Activated CD4-positive, alpha-beta memory T cell treated with anti-CD3 and anti-CD28 coated beads, Interleukin-2, amount 10 ng/mL, durations not matched to agents 7 days and 5 days (primary cell): ENCODE measurements at regions of chr12 and their contacts with region 1.

Region 1: DNA sequence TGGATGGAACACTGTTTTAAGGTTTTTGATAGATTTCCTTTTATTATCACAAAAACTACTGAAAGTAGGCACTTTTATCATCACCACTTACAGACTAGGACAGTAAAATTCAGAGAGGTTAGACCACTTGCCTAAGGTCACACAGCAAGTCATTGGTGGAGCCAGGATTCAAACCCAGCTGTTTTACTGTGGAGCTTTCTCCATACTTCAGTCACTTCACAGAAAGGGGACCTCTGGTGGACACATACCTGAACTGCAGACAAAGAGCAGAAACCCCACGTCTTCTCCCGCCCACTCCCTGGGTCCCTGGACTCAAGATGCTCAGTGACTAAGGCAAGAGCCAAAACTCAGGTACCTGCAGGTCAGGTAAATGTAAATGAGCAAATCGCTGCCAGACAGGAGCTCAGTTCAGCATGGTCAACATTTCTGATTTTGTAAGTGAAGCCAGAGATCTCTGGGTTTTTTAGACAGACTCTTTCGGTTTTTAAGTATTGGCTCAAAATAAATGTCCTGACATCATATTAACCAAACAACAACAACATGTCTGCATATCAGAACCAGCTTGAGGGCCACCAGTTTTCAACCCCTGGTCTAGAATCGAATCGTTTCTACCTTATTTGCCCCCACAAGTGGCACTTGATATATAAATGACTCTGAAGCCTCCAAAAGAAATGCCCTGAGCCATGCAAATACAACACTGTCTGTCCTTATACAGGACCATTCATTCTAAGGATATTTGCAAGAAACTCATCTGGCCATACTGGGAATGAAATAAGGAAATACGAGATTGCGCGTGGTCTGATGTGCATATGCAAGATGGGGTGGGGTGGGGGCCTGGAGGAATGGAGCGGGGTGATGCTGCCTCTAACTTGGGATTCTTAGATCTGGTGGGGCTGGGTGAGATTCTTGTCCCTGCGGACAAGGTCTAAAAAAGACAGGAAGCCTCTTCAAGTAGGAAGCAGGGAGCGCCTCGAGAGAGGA is 110.9 kb downstream of the KSR2 start:
- DNase-seq: peak; percentile 52
- H3K4me3 Mint-ChIP-seq: no peak overlapping the region
- H3K27ac Mint-ChIP-seq: no peak overlapping the region
- H3K4me1 Mint-ChIP-seq: no peaks in the 10 kb centered on the region
- H3K27me3 Mint-ChIP-seq: no peaks in the 10 kb centered on the region

Region 2: DNA sequence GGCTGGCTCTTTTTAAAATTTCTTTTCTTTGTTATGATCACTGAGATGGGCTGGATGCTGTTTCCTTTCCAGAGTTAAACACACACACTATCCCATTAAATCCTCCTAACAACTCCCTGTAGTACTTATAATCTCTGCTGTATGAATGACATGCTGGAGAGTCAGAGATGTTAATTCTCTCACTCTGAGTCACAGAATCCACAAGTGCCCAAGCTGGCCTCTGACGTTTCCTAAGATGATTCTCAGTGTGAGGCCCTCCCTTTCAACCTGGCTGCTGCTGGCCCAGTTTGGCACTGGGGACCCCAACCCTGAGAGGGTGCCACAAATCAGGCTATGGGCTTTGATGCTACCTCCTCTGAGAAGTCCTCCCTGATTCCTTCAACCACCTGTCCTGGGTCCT is 501.9 kb before region 1 on chr12:
- CTCF ChIA-PET with region 1: no interaction called
- POLR2A ChIA-PET with region 1: no interaction called
- DNase-seq: no peak
- H3K4me3 Mint-ChIP-seq: no peak overlapping the region
- H3K27ac Mint-ChIP-seq: no peak overlapping the region
- H3K4me1 Mint-ChIP-seq: no peaks in the 10 kb centered on the region
- H3K27me3 Mint-ChIP-seq: peaks cover 11% of the 10 kb centered on the region

Region 3: DNA sequence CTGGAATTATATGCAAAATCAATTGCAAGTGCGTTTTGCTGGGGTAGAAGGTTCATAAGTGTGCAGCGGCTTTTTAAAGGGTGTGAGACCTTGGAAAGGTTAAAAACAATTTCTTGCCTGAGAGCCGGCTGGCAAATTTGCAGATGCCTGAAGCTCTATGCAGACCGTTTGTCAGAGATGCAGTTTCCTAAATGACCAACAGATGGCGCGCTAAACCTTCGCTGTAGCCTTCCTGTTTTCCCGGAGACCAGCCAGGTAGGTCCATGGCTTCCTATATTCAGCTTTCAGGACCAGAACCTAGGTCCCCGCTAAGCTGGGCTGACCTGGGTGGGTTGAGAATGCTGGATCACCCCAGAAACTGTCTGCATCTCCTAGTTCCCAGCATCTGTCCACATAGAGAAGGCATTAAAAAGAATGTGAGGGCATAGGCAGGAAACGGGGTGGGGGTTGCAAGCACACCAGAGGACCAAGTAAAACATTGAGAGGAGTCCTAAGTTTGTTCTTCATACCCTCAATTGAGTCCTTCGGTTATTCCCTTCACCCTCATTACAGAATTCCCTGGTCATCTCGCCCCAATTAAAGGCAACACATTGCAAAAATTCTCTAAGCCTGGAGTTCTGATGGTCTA is 490.8 kb before region 1 on chr12:
- CTCF ChIA-PET with region 1: interaction called, 13 read pairs
- POLR2A ChIA-PET with region 1: no interaction called
- DNase-seq: peak; percentile 56
- H3K4me3 Mint-ChIP-seq: no peak overlapping the region
- H3K27ac Mint-ChIP-seq: no peak overlapping the region
- H3K4me1 Mint-ChIP-seq: no peaks in the 10 kb centered on the region
- H3K27me3 Mint-ChIP-seq: peaks cover 22% of the 10 kb centered on the region

Region 4: DNA sequence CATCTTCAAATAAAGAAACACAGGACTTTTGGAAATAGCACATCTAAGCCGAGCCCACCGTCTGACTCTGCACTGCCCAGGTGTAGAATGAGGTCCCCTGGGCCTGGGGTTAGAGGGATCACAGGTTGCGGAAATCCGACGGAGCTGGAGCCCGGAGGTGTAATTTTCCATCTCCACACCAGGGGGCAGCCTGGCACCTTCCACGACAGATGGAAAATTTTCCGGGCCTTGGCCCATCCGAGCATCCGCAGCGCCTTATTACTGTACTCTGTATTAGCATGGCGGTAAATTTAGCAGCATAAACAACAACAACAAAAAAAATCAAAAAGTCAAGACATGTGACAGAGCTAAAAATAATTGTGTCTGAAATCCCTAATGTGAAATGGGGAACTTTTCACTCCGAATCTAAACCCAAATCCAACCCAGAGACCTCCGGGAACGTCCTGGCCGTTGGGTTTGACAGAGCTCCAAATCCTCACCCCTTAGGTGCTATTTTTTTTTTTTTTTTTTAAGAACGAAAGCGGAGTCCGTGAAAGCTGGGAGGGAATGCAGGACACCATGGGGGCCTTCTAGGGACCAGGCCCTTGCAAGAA is 17.0 kb after region 1 on chr12:
- CTCF ChIA-PET with region 1: interaction called, 41 read pairs
- POLR2A ChIA-PET with region 1: no interaction called
- DNase-seq: peak; percentile 67
- H3K4me3 Mint-ChIP-seq: no peak overlapping the region
- H3K27ac Mint-ChIP-seq: no peak overlapping the region
- H3K4me1 Mint-ChIP-seq: peaks cover 8% of the 10 kb centered on the region
- H3K27me3 Mint-ChIP-seq: peaks cover 12% of the 10 kb centered on the region